HepG2 (cell line): ENCODE measurements at regions of chr22 and their contacts with region 1.

Region 1: DNA sequence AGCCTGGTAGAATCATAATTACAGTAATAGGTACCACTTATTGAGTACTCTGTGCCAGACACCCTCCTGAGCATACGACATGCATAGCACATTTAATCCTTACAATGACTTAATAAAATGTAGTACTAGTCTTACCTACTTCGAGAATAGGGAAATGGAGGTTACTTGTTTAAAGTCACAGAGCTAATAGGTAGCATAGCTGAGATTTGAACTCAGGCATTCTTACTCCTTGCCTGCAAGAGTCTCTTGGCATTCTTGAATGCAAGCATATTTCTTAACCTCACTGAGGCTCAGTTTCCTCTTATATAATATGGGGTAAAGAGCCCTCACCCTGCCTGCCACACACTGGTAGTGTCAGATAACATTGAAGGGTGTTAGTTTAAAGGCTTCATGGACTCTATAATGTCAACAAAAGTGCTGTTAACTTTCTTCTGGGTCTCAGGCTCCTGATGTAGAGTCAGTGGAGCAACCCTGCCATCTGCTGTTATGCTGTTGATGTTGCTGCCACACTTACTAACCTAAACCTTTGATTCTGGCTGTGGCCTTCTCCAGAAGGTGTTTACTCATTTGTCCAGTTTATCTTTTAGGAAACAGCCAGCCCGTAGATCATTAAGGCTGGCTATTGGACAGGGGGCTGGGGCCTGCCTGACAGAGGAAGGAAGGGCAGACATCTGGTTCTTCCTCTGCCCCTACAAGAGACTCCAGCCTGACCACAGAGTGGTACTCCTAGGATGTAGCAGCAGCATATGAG is 18.9 kb downstream of the LIMK2 start:
- DNase-seq: peak; percentile 83
- ATAC-seq: peak; percentile 93
- H3K4me3 ChIP-seq: no peak overlapping the region
- H3K27ac ChIP-seq: peak overlapping the region; percentile 61
- H3K4me1 ChIP-seq: peaks cover 56% of the 10 kb centered on the region
- H3K27me3 ChIP-seq: no peaks in the 10 kb centered on the region
- CTCF ChIP-seq: peak; percentile 96
- EP300 ChIP-seq: peak in 1 of 2 experiments; percentile 37; a peak in 1 of 4 replicates
- POLR2A ChIP-seq: no peak
- RAD21 ChIP-seq: peak; percentile 97

Region 2: GRCh38 chr22:31160328-31160978 is 70.6 kb before region 1 on chr22:
- CTCF ChIA-PET with region 1: no interaction called
- POLR2A ChIA-PET with region 1: interaction called, 3 read pairs
- in situ Hi-C with region 1: no loop called
- intact Hi-C with region 1: loop called (anchors 5 kb)
- DNase-seq: no peak
- ATAC-seq: peak; percentile 79
- H3K4me3 ChIP-seq: peak overlapping the region; percentile 84 to 92 (median 90)
- H3K27ac ChIP-seq: peak overlapping the region; percentile 64
- H3K4me1 ChIP-seq: peaks cover 29% of the 10 kb centered on the region
- H3K27me3 ChIP-seq: no peaks in the 10 kb centered on the region; a peak in 1 of 5 replicates
- CTCF ChIP-seq: no peak
- EP300 ChIP-seq: no peak
- POLR2A ChIP-seq: no peak
- RAD21 ChIP-seq: no peak

Region 3: GRCh38 chr22:31199183-31199582 is 31.9 kb before region 1 on chr22:
- CTCF ChIA-PET with region 1: interaction called, 37 read pairs
- POLR2A ChIA-PET with region 1: interaction called, 3 read pairs
- in situ Hi-C with region 1: loop called (anchors 5 kb)
- intact Hi-C with region 1: loop called (anchors 1 kb)
- DNase-seq: peak; percentile 50
- ATAC-seq: peak; percentile 86
- H3K4me3 ChIP-seq: no peak overlapping the region
- H3K27ac ChIP-seq: peak overlapping the region; percentile 9
- H3K4me1 ChIP-seq: peaks cover 8% of the 10 kb centered on the region
- H3K27me3 ChIP-seq: no peaks in the 10 kb centered on the region
- CTCF ChIP-seq: peak; percentile 80
- EP300 ChIP-seq: no peak
- POLR2A ChIP-seq: no peak
- RAD21 ChIP-seq: peak; percentile 66; the same call in 1 of the 2 replicates

Region 4: DNA sequence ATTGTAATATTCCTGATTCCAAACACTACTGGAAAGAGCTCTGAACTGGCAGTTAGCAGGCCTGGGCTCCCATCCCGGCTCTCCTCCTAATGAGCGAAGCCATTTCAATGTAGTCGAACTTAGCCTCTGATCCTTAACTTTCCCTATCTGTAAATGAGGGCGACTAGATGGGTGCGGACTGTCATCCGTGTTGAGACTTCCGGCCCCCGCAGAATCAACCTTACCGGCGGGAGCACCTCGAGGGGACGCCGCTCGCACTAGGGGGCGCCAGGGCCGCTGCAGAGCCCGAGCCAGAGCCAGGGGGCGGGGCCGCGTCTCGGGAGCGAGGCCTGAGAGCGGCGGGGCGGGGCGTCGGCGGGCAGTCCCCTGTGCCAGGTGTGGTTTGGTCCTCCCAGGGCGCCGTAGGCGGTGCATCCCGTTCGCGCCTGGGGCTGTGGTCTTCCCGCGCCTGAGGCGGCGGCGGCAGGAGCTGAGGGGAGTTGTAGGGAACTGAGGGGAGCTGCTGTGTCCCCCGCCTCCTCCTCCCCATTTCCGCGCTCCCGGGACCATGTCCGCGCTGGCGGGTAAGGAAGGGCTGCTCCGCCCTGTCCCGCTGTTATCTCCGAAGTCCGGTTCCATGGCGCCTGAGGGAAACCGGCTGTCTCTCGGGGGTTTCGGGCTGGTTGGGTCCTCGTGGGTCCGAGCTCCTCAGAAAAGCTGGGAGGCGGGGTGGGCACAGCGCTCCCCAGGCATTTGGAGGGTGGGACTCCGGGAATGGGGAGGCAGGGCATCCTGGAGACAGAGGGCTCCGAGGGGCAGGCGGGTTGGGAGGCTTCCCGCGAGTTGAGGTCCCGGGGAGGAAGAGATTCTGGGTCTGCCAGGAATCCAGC is 18.9 kb before region 1 on chr22 and contains the start of gene LIMK2:
- CTCF ChIA-PET with region 1: interaction called, 34 read pairs
- POLR2A ChIA-PET with region 1: interaction called, 168 read pairs
- in situ Hi-C with region 1: no loop called
- intact Hi-C with region 1: loop called (anchors 1 kb)
- DNase-seq: peak; percentile 83
- ATAC-seq: peak; percentile 88
- H3K4me3 ChIP-seq: peak within 1 kb of the TSS; percentile 90 to 99 (median 97)
- H3K27ac ChIP-seq: peak within 1 kb of the TSS; percentile 73
- H3K4me1 ChIP-seq: peaks cover 79% of the 10 kb centered on the region
- H3K27me3 ChIP-seq: no peaks in the 10 kb centered on the region; a peak in 1 of 5 replicates
- CTCF ChIP-seq: peak; percentile 92
- EP300 ChIP-seq: no peak
- POLR2A ChIP-seq: peak; percentile 83 to 91
- RAD21 ChIP-seq: peak; percentile 86
- total RNA-seq, gene LIMK2: 25.9 and 29.8 TPM in 2 replicates

Region 5: GRCh38 chr22:31218565-31219262 is 12.3 kb before region 1 on chr22:
- CTCF ChIA-PET with region 1: interaction called, 3 read pairs
- POLR2A ChIA-PET with region 1: interaction called, 168 read pairs
- in situ Hi-C with region 1: no loop called
- intact Hi-C with region 1: no loop called
- DNase-seq: no peak
- ATAC-seq: no peak
- H3K4me3 ChIP-seq: no peak overlapping the region
- H3K27ac ChIP-seq: peak overlapping the region; percentile 91
- H3K4me1 ChIP-seq: peaks cover 97% of the 10 kb centered on the region
- H3K27me3 ChIP-seq: no peaks in the 10 kb centered on the region
- CTCF ChIP-seq: no peak
- EP300 ChIP-seq: no peak
- POLR2A ChIP-seq: no peak
- RAD21 ChIP-seq: no peak

Region 6: GRCh38 chr22:31248138-31248745 is 17.2 kb after region 1 on chr22:
- CTCF ChIA-PET with region 1: no interaction called
- POLR2A ChIA-PET with region 1: no interaction called
- in situ Hi-C with region 1: no loop called
- intact Hi-C with region 1: no loop called
- DNase-seq: no peak
- ATAC-seq: no peak
- H3K4me3 ChIP-seq: no peak overlapping the region
- H3K27ac ChIP-seq: no peak overlapping the region
- H3K4me1 ChIP-seq: peaks cover 73% of the 10 kb centered on the region
- H3K27me3 ChIP-seq: no peaks in the 10 kb centered on the region
- CTCF ChIP-seq: no peak
- EP300 ChIP-seq: no peak
- POLR2A ChIP-seq: no peak
- RAD21 ChIP-seq: no peak

Region 7: GRCh38 chr22:31278622-31279326 is 47.7 kb after region 1 on chr22:
- CTCF ChIA-PET with region 1: no interaction called
- POLR2A ChIA-PET with region 1: no interaction called
- in situ Hi-C with region 1: no loop called
- intact Hi-C with region 1: no loop called
- DNase-seq: no peak
- ATAC-seq: no peak
- H3K4me3 ChIP-seq: no peak overlapping the region
- H3K27ac ChIP-seq: no peak overlapping the region
- H3K4me1 ChIP-seq: peaks cover 5% of the 10 kb centered on the region; the same call in 1 of the 2 replicates
- H3K27me3 ChIP-seq: no peaks in the 10 kb centered on the region
- CTCF ChIP-seq: no peak
- EP300 ChIP-seq: no peak
- POLR2A ChIP-seq: no peak
- RAD21 ChIP-seq: no peak